B cell (primary cell): ENCODE measurements at regions of chr2 and their contacts with region 1.

Region 1: GRCh38 chr2:113181258-113182051 is 7.7 kb downstream of the PSD4 start:
- DNase-seq: no peak
- ATAC-seq: peak; percentile 37
- H3K4me3 ChIP-seq: no peak overlapping the region
- H3K4me3 Mint-ChIP-seq: peak overlapping the region; percentile 49
- H3K27ac ChIP-seq: peak overlapping the region; percentile 19 to 73
- H3K27ac Mint-ChIP-seq: peak overlapping the region; percentile 90
- H3K4me1 ChIP-seq: peaks cover 72 to 91% of the 10 kb centered on the region in 2 donors
- H3K4me1 Mint-ChIP-seq: peaks cover 90% of the 10 kb centered on the region
- H3K27me3 ChIP-seq: no peaks in the 10 kb centered on the region
- H3K27me3 Mint-ChIP-seq: no peaks in the 10 kb centered on the region
- CTCF ChIP-seq: no peak

Region 2: DNA sequence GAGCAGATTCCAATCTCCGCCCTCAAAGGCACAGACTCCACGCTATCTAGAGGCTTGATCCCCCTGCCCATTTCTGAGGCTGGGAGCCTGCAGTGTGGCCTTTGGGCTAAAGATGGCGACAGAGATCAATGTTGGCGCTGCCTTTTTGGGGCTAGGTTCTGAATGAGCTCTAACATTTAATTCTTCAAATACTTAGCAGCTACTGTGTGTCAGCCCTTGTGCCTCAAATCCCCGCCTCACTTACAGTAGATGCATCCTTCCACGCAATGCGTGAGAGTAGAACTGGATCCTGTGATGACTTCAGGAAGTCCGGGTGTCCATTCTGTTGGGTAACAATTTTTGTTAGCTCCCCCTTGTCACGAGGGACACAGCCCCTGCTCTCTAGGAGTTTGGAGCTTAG is 101.3 kb before region 1 on chr2:
- CTCF ChIA-PET with region 1: interaction called, 11 read pairs
- POLR2A ChIA-PET with region 1: no interaction called
- intact Hi-C with region 1: no loop called
- DNase-seq: peak; percentile 59
- ATAC-seq: peak; percentile 51
- H3K4me3 ChIP-seq: no peak overlapping the region
- H3K4me3 Mint-ChIP-seq: no peak overlapping the region
- H3K27ac ChIP-seq: no peak overlapping the region
- H3K27ac Mint-ChIP-seq: no peak overlapping the region
- H3K4me1 ChIP-seq: no peaks in the 10 kb centered on the region
- H3K4me1 Mint-ChIP-seq: peaks cover 2% of the 10 kb centered on the region
- H3K27me3 ChIP-seq: peaks cover 0 to 14% (median 6%) of the 10 kb centered on the region in 4 experiments
- H3K27me3 Mint-ChIP-seq: peaks cover 39% of the 10 kb centered on the region
- CTCF ChIP-seq: peak; percentile 80